ENCODE measurements at regions of chr15 and their contacts with region 1.

Region 1: DNA sequence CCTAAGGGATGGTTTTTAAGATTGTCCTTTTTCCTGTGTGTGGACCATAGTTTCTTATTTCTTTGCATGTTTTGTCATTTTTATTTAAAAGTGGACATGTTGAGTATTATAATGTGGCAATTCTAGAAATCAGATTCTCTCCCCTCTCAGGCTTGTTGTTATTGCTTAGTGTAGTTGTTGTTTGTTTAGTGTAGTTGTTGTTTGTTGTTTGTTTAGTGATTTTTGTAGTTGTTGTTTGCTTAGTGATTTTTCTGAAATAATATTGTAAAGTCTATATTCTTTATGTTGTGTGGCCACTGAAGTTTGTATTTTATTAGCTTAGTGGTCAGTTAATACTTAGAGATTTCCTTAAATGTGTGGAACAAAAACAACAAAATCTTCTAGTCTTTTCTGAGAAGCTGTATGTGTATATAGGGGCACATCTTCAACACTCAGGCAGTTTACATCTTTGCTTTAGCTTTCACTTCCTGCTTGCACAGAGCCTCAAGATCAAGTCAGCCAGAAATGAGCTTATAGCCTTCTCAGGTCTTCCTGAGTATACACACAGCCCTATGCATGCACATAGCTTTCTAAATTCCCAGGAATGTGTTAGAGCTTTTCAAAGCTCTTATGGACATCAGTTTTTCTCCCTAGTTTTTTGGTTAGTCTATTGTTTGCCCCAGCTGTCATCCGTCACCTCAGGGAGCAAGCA is 22.3 kb upstream of the MTMR10 start:
- DNase-seq: peak in 2 of 14 experiments; percentile 20 to 29
- ATAC-seq: peak; percentile 73
- H3K4me3 ChIP-seq: no peak overlapping the region
- H3K4me3 Mint-ChIP-seq: no peak overlapping the region
- H3K27ac ChIP-seq: no peak overlapping the region
- H3K27ac Mint-ChIP-seq: peak overlapping the region; percentile 69
- H3K4me1 ChIP-seq: no peaks in the 10 kb centered on the region
- H3K4me1 Mint-ChIP-seq: peaks cover 20% of the 10 kb centered on the region
- H3K27me3 ChIP-seq: no peaks in the 10 kb centered on the region
- H3K27me3 Mint-ChIP-seq: peaks cover 8% of the 10 kb centered on the region
- CTCF ChIP-seq: no peak

Region 2: DNA sequence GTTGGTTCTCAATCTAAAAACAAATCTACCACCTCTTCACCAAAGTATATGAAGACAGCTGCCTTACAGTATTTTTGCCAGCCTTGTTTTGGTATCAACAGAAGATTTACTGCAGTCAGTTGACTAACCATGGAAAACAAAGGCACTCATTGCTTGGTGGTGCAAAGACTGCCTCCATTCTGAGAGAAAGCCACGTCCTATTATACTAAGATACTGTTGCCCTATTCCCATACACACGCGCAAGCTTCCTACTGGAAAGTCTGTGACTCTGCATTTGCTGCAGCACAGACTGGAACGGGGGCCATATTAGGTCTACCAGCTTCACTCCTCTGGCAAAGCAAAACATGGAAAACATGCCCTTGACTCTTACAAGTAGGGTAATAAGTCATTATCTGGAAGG is 40.3 kb before region 1 on chr15:
- CTCF ChIA-PET with region 1: no interaction called
- POLR2A ChIA-PET with region 1: no interaction called
- intact Hi-C with region 1: loop called in 1 of 2 experiments (anchors 5 kb)
- DNase-seq: no peak
- ATAC-seq: no peak
- H3K4me3 ChIP-seq: no peak overlapping the region
- H3K4me3 Mint-ChIP-seq: no peak overlapping the region
- H3K27ac ChIP-seq: no peak overlapping the region
- H3K27ac Mint-ChIP-seq: no peak overlapping the region
- H3K4me1 ChIP-seq: no peaks in the 10 kb centered on the region
- H3K4me1 Mint-ChIP-seq: peaks cover 24% of the 10 kb centered on the region
- H3K27me3 ChIP-seq: no peaks in the 10 kb centered on the region
- H3K27me3 Mint-ChIP-seq: no peaks in the 10 kb centered on the region
- CTCF ChIP-seq: no peak

Region 3: DNA sequence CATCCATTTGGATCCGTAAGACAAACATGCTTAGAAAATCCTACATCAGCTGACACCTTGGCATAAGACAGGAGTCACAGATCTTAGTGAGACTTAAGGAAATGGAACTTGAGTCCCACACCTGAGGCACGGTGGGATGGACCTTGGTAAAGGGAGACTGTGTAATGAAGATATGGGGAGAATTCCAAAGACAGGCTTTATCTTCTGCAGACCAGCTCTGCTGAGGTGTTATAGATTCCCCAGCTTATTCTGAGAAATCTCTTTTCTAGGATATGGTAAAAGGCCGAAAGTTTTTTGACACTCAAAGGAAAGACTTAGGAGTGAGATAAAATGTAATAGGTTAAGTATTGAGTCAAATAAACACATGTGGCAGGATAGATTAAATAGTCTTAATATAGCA is 14.0 kb before region 1 on chr15:
- CTCF ChIA-PET with region 1: no interaction called
- POLR2A ChIA-PET with region 1: no interaction called
- intact Hi-C with region 1: no loop called
- DNase-seq: no peak
- ATAC-seq: no peak
- H3K4me3 ChIP-seq: no peak overlapping the region
- H3K4me3 Mint-ChIP-seq: no peak overlapping the region
- H3K27ac ChIP-seq: no peak overlapping the region
- H3K27ac Mint-ChIP-seq: no peak overlapping the region
- H3K4me1 ChIP-seq: peaks cover 8% of the 10 kb centered on the region
- H3K4me1 Mint-ChIP-seq: peaks cover 7% of the 10 kb centered on the region
- H3K27me3 ChIP-seq: peaks cover 0 to 16% of the 10 kb centered on the region in 2 experiments
- H3K27me3 Mint-ChIP-seq: peaks cover 23% of the 10 kb centered on the region
- CTCF ChIP-seq: no peak

Measured in CD4-positive, alpha-beta T cell (primary cell).